Cardiac septum (tissue), 1 donor: ENCODE measurements at regions of chr3 and their contacts with region 1.

Region 1: GRCh38 chr3:58332575-58333188 is at the start of gene PXK:
- DNase-seq: peak; percentile 93
- total RNA-seq, gene PXK: 10.8 TPM

Region 2: DNA sequence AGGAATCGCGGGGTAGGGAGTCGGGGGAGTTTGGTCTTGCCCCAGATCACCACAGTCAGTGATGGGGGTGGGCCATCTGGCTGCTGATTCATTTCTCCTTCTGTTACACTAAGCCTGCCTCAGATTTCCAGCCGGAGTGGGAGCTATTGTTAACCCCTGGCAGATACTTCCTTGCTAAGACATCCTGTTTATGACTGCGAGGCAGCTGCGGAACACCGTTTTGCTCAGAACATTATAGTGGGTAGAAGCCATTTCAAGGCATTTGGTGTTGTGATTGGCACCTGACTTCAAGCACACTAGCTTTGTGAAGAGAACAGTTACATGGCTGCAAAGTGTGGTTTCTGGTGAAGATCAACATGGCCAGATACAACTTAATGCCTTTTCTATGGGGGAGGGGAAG is 250.6 kb before region 1 on chr3:
- intact Hi-C with region 1: no loop called
- DNase-seq: no peak

Region 3: DNA sequence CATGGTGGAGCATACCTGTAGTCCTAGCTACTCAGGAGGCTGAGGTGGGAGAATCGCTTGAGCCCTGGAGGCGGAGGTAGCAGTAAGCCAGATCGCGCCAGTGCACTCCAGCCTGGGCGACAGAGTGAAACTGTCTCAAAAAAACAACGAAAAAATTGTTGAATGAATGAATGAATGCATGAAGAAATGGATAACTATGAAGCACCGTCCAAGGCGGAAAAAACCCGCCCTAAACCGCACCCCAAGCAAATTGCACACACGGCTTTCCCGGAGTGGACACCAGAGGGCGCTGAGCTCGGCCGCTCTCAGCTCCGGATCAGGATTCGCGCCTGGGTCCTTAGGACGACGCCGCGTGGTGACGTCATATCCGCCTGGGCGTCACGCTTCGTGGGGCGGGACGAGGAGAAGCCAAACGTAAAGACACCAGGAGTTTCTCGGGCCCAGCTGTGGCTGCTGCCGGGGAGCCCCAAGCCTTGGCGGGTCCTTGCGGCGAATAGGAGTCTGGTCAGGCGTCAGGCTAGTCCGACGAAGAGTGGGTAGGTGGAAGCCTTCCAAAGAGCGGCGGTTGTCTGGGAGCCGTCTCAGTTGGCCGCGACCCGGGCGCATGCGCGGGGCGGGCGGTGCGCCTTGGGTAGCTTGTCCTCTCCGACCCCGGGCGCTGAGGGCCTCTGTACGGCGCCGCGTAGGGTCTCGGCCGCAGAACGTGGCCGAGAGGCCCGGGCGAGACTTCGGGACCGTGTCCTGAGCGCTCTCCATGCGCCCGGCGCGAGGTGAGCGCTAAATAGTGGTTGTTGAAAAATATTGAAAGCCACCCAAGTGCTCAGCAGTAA is 26.6 kb before region 1 on chr3 and contains the starts of genes HTD2 and RPP14:
- intact Hi-C with region 1: loop called (anchors 1 kb)
- DNase-seq: peak; percentile 99
- total RNA-seq, gene HTD2: 12.9 TPM
- total RNA-seq, gene RPP14: 17.0 TPM

Region 4: GRCh38 chr3:58398669-58399333 is 66.1 kb after region 1 on chr3:
- intact Hi-C with region 1: loop called (anchors 5 kb)
- DNase-seq: no peak

Region 5: GRCh38 chr3:58414538-58415197 is 82.0 kb after region 1 on chr3:
- intact Hi-C with region 1: loop called (anchors 5 kb)
- DNase-seq: no peak

Region 6: GRCh38 chr3:58433400-58434169 is 100.9 kb after region 1 on chr3 and contains the start of gene PDHB:
- intact Hi-C with region 1: loop called (anchors 1 kb)
- DNase-seq: peak; percentile 96
- total RNA-seq, gene PDHB: 174 TPM

Region 7: DNA sequence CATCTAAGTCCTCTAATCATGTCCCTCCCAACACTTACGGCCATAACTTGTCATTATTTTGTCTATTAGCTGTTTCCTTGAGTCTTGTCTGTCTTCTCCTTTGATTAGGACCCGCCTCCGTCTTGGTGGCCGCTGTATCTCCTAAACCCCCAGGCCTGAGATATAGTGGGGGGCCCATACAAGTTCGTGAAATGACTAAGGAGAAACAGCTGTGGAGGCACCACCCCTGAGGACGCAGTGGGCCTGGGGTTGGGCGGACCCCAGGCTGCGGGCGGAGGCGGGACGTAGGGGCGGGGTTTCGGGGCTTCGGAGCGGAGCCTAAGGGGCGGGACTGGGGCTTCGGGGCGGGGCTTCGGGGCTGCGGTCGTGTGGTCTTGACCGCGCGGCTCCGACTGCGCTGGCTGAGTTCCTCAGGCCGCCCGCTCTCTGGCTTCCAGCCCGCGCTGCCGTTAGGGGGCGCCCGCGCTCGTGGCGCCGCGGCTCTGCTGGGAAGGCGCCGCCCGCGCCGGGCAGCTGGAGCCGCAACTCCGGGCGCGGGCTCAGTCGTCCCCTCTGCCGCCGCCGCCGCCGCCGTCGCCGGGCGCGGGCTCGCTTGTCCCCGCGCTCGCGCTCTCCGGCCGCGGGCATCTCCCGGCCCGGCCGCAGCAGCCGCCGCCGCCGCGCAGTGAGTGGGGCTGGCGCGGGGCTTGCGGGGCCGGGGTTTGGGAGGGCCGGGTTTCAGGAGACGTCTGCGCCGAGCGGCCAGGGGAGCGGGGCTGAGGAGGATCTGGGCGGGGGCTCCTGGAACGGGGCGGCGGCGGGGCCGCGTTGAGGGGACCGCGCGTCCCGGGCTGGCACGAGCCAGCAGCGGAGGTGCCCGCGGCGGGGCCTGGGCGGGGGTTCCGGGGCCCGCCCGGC is 159.1 kb after region 1 on chr3 and contains the start of gene KCTD6:
- intact Hi-C with region 1: loop called (anchors 1 kb)
- DNase-seq: peak; percentile 96
- total RNA-seq, gene KCTD6: 7.5 TPM

Region 8: GRCh38 chr3:58532794-58533220 is 200.1 kb after region 1 on chr3:
- intact Hi-C with region 1: loop called (anchors 10 kb)
- DNase-seq: peak; percentile 83